Activated naive CD4-positive, alpha-beta T cell treated with anti-CD3 and anti-CD28 coated beads, Interleukin-2, amount 10 ng/mL, durations not matched to agents 7 days and 5 days (primary cell): ENCODE measurements at regions of chr7 and their contacts with region 1.

Region 1: DNA sequence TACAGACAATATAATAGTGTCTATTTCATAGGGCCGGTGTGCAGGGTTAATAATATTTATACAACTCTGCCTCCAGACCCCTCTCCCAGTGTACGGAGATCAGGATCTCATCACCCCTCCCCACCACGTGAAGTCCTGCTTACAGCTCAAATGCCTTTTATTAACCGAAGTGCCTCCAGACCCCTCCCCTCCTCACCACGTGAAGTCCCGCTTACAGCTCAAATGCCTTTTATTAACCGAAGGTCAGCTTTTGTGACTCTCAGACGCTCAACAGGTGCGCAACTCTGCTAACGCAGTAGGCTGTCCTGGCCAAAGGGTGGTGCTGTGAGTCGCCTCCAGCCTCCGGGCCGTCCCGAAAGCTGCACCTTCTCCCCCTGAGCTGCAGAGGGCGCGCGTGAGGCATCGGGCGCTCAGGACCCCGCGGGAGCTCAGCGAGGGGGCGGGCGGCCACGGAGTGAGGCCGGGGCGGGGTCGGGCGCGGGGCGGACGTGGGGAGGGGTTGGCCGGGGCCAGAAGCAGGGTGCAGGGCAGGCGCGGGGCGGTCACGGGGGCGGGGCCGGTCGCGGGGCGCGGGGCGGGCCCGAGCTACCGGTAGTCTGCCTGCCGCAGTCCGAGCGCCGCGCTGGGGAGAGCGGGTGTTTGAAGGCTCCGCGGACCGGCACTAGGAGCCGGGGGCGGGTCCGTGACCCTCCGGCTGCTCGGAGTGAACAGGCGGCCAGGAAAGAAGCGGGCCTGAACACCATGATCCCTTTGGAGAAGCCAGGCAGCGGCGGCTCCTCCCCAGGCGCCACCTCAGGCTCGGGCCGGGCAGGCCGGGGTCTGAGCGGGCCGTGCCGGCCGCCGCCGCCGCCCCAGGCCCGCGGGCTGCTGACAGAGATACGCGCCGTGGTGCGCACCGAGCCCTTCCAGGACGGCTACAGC is at the start of gene STK17A:
- DNase-seq: peak; percentile 93
- H3K4me3 Mint-ChIP-seq: peak within 1 kb of the TSS; percentile 97
- H3K27ac Mint-ChIP-seq: peak within 1 kb of the TSS; percentile 99
- H3K4me1 Mint-ChIP-seq: peaks cover 31% of the 10 kb centered on the region
- H3K27me3 Mint-ChIP-seq: peaks cover 18% of the 10 kb centered on the region

Region 2: DNA sequence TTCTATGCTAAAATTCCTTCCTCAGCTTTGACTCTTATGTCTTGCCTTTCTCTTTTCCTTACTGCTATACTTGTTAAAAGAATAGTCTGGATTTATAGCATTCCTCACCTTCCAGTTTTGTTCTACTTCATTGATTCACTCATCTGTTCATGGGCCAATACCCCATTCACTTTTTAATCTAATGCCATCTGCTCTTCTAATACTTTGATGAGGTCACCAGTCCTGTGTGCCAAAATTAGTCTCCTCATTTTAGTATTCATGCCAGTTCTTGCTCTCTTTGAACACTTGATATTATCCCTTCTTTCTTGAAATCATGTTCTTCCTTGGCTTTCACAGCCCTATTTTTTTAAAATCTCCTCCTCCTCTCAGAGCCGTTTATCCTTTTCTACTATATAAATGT is 19.5 kb after region 1 on chr7:
- CTCF ChIA-PET with region 1: interaction called, 10 read pairs
- DNase-seq: no peak
- H3K4me3 Mint-ChIP-seq: no peak overlapping the region
- H3K27ac Mint-ChIP-seq: no peak overlapping the region
- H3K4me1 Mint-ChIP-seq: peaks cover 34% of the 10 kb centered on the region
- H3K27me3 Mint-ChIP-seq: no peaks in the 10 kb centered on the region

Region 3: GRCh38 chr7:43647673-43648472 is 65.1 kb after region 1 on chr7:
- CTCF ChIA-PET with region 1: interaction called, 108 read pairs
- DNase-seq: peak; percentile 57
- H3K4me3 Mint-ChIP-seq: peak overlapping the region; percentile 70
- H3K27ac Mint-ChIP-seq: peak overlapping the region; percentile 90
- H3K4me1 Mint-ChIP-seq: peaks cover 94% of the 10 kb centered on the region
- H3K27me3 Mint-ChIP-seq: no peaks in the 10 kb centered on the region

Region 4: GRCh38 chr7:43700059-43700501 is 117.3 kb after region 1 on chr7:
- CTCF ChIA-PET with region 1: interaction called, 393 read pairs
- DNase-seq: no peak
- H3K4me3 Mint-ChIP-seq: no peak overlapping the region
- H3K27ac Mint-ChIP-seq: no peak overlapping the region
- H3K4me1 Mint-ChIP-seq: peaks cover 62% of the 10 kb centered on the region
- H3K27me3 Mint-ChIP-seq: no peaks in the 10 kb centered on the region

Region 5: GRCh38 chr7:43729214-43729923 is 146.6 kb after region 1 on chr7 and contains the start of gene COA1:
- CTCF ChIA-PET with region 1: interaction called, 19 read pairs
- DNase-seq: peak; percentile 84
- H3K4me3 Mint-ChIP-seq: peak within 1 kb of the TSS; percentile 90
- H3K27ac Mint-ChIP-seq: peak within 1 kb of the TSS; percentile 86
- H3K4me1 Mint-ChIP-seq: peaks cover 37% of the 10 kb centered on the region
- H3K27me3 Mint-ChIP-seq: peaks cover 10% of the 10 kb centered on the region

Region 6: DNA sequence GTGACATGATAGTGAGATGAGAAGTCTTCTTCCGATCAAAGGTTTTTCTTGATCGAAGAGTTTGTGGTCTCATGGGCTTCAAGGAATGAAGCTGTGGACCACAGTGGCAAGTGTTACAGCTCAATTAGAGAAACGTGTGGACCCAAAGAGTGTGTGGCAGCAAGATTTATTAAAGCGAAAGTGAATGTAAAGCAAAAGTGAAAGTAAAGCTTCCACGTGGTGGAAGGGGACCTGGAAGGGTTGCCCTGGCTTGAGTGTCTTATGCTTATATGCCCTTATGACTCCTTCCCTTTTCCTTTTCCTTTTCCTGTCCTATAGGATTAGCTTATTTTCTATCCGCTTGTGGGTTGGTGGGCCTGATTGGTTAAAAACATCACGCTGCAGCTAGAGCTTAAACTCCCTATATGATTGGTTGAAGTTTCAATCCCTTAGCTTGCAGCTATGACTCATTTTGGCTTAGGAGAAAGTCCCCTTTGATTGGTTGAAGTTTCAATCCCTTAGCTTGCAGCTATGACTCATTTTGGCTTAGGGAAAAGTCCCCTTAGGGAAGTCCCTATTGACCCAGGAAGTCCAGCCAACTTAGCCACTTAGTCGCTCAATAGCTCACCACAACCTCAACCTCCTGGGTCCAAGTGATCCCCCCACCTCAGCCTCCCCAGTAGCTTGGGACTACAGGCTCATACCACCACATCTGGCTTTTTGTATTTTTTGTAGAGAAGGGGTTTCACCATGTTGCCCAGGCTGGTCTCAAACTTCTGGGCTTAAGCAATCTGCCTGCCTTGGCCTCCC is 251.9 kb after region 1 on chr7:
- CTCF ChIA-PET with region 1: interaction called, 47 read pairs
- DNase-seq: peak; percentile 40
- H3K4me3 Mint-ChIP-seq: peak overlapping the region; percentile 60
- H3K27ac Mint-ChIP-seq: peak overlapping the region; percentile 61
- H3K4me1 Mint-ChIP-seq: peaks cover 21% of the 10 kb centered on the region
- H3K27me3 Mint-ChIP-seq: peaks cover 36% of the 10 kb centered on the region